Activated T-helper 2 cell treated with anti-CD3 and anti-CD28 coated beads, Interferon-gamma antibody, Interleukin-2, Interleukin-4, amounts not matched to agents 10 μg/mL and 5 μg/mL and 100 μg/mL, durations not matched to agents 14 hours and 24 hours and 36 hours (primary cell): ENCODE measurements at regions of chr4 and their contacts with region 1.

Region 1: GRCh38 chr4:73258686-73259570 is at the start of gene ANKRD17:
- DNase-seq: peak; percentile 89
- H3K4me3 Mint-ChIP-seq: peak within 1 kb of the TSS; percentile 95
- H3K27ac Mint-ChIP-seq: peak within 1 kb of the TSS; percentile 100
- H3K4me1 Mint-ChIP-seq: peaks cover 27% of the 10 kb centered on the region
- H3K27me3 Mint-ChIP-seq: no peaks in the 10 kb centered on the region
- total RNA-seq, gene ANKRD17: 70.0 and 71.4 TPM in 2 replicates

Region 2: DNA sequence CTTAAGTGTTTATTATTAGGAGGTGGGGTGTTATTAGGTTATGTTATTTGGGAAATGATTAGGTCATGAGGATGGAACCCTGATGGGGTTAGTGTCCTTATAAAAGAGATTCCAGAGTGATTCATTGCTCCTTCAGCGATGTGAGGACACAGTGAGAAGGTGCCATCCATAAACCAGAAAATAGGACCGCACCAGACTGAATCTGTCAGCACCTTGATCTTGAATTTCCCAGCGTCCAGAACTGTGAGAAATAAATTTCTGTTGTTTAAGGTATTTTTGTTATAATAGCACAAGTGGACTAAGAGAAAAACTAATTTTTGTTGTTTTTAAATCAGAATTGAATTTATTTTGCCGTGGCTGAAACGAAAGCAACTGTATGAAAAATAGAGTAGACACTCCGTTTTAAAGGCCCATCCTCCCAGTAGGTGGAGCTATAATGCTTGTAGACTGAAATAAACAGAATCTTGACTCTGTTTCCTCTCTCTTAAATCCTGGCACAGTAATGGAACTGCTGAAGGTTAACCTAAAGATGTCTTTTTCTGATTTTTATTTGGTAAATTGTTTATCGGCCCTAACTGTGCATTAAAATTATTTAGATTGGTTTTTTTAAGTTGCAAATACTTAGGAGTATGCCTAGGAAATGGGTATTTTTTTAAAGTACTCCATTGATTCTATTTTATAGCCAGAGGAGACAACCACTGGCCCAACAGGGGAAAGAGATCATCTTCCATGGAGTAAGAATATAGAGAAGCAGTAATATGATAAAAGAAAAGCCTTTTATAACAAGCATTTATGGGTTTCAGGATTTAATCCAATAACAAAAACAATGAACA is 556.7 kb before region 1 on chr4:
- intact Hi-C with region 1: loop called (anchors 5 kb)
- DNase-seq: no peak
- H3K4me3 Mint-ChIP-seq: peak overlapping the region; percentile 64
- H3K27ac Mint-ChIP-seq: no peak overlapping the region
- H3K4me1 Mint-ChIP-seq: no peaks in the 10 kb centered on the region
- H3K27me3 Mint-ChIP-seq: peaks cover 4% of the 10 kb centered on the region

Region 3: GRCh38 chr4:73069338-73070073 is 189.4 kb before region 1 on chr4 and contains the start of gene COX18:
- intact Hi-C with region 1: loop called (anchors 1 kb)
- DNase-seq: peak; percentile 94
- H3K4me3 Mint-ChIP-seq: peak within 1 kb of the TSS; percentile 83
- H3K27ac Mint-ChIP-seq: peak within 1 kb of the TSS; percentile 100
- H3K4me1 Mint-ChIP-seq: peaks cover 35% of the 10 kb centered on the region
- H3K27me3 Mint-ChIP-seq: no peaks in the 10 kb centered on the region
- total RNA-seq, gene COX18: 20.9 and 21.3 TPM in 2 replicates

Region 4: DNA sequence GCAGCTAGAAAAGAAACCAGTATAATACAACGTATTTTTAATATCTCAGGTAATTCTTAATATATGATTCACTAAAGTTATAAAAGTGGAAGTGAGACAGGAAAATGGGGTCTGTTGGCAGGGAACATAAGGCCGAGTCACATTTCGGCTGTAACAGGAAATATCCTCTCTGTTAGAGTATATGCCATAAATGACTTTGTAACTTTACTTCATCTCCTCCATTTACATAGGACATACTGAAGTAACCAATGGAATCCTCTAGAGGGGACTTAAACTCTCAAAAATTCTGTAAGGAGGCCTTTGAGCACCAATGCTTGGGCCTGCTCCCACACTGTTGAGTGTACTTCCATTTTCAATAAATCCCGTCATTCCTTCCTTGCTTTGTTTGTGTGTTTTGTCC is 71.6 kb before region 1 on chr4:
- intact Hi-C with region 1: no loop called
- DNase-seq: no peak
- H3K4me3 Mint-ChIP-seq: no peak overlapping the region
- H3K27ac Mint-ChIP-seq: peak overlapping the region; percentile 1
- H3K4me1 Mint-ChIP-seq: peaks cover 9% of the 10 kb centered on the region
- H3K27me3 Mint-ChIP-seq: no peaks in the 10 kb centered on the region

Region 5: GRCh38 chr4:73208376-73208775 is 50.6 kb before region 1 on chr4:
- intact Hi-C with region 1: no loop called
- DNase-seq: no peak
- H3K4me3 Mint-ChIP-seq: no peak overlapping the region
- H3K27ac Mint-ChIP-seq: no peak overlapping the region
- H3K4me1 Mint-ChIP-seq: peaks cover 19% of the 10 kb centered on the region
- H3K27me3 Mint-ChIP-seq: no peaks in the 10 kb centered on the region

Region 6: DNA sequence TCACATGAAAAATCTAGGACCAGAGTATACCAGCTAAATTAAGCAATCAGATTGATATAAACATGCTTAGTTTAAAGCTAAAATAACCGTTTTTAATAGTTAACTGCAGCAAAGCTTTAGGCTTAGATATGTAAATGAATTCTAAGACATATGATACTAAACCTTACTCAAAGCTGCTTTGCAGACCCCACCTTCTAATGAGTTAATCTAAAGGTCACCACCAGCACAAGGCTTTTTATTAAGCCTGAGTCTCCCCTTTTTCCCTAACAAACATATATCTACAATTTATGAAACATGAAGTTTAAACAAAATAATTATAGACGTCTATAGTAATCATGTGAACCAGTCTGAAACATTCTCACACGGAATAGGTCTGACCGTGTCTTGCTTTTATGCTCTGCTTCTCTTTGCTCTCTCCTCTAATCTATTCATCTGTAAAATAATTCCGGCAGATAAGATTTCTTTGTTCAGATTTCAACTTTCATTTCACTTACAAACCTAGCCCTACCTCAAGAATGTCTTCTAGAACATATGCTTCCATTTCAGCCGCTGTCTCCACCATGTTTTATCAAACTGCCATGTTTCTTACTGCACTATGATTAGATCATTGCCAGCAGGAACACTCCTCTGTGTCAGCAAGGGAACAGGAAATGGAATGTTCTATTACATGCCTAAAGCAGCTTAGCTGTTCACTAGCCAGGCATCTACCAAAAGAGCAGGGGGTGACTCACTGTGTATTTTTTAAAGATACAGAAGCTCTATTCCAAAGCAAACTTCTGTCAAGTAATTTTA is 36.3 kb before region 1 on chr4:
- intact Hi-C with region 1: loop called (anchors 1 kb)
- DNase-seq: peak; percentile 57
- H3K4me3 Mint-ChIP-seq: no peak overlapping the region
- H3K27ac Mint-ChIP-seq: no peak overlapping the region
- H3K4me1 Mint-ChIP-seq: peaks cover 23% of the 10 kb centered on the region
- H3K27me3 Mint-ChIP-seq: no peaks in the 10 kb centered on the region

Region 7: GRCh38 chr4:73631565-73632226 is 372.8 kb after region 1 on chr4:
- intact Hi-C with region 1: no loop called
- DNase-seq: no peak
- H3K4me3 Mint-ChIP-seq: no peak overlapping the region
- H3K27ac Mint-ChIP-seq: no peak overlapping the region
- H3K4me1 Mint-ChIP-seq: no peaks in the 10 kb centered on the region
- H3K27me3 Mint-ChIP-seq: no peaks in the 10 kb centered on the region

Region 8: DNA sequence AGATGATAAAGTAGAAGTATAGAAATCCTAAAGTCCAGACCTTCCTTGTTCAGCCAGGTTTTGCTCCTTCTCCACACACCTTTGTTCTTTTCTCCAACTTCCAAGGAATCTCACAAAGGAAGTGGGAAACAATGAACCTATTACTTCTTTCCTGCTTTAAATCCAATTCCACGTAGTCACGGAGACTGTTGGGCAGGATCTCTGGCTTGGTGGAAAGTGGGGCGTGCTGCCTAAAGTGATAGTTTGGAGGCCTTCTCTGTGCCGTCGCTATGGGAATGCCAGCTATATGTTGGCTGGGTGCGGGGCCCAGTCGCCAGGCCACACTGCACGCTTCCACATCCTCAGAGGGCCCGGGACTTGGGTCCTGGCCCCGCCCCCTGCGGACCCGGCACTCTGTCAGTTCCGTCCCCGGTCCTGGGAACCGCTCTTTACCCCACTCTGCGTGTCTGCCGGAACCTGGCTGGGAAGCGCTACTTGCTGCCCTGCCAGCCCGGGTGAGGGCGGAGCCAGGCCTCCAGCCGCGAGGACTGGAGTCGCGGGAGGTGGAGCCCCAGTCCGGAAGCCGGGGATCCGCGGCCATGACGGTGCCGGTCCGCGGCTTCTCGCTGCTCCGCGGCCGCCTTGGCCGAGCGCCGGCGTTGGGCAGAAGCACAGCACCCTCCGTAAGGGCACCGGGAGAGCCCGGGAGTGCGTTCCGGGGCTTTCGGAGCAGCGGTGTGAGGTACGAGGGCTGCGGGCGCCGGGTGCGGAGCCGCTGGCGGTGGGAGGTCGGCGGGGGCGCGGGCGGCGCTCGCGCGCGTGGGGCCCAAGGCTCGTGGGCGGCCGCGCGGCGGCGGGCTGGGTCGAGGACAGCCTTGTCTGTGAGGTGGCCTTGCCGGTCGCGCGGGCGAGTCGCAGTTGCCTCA is 898.9 kb after region 1 on chr4 and contains the start of gene MTHFD2L:
- intact Hi-C with region 1: loop called (anchors 2 kb)
- DNase-seq: peak; percentile 79
- H3K4me3 Mint-ChIP-seq: peak within 1 kb of the TSS; percentile 87
- H3K27ac Mint-ChIP-seq: peak within 1 kb of the TSS; percentile 90
- H3K4me1 Mint-ChIP-seq: peaks cover 25% of the 10 kb centered on the region
- H3K27me3 Mint-ChIP-seq: peaks cover 28% of the 10 kb centered on the region
- total RNA-seq, gene MTHFD2L: 8.6 TPM in 2 replicates